Right cardiac atrium (tissue), 5 donors: ENCODE measurements at regions of chr6 and their contacts with region 1.

Region 1: DNA sequence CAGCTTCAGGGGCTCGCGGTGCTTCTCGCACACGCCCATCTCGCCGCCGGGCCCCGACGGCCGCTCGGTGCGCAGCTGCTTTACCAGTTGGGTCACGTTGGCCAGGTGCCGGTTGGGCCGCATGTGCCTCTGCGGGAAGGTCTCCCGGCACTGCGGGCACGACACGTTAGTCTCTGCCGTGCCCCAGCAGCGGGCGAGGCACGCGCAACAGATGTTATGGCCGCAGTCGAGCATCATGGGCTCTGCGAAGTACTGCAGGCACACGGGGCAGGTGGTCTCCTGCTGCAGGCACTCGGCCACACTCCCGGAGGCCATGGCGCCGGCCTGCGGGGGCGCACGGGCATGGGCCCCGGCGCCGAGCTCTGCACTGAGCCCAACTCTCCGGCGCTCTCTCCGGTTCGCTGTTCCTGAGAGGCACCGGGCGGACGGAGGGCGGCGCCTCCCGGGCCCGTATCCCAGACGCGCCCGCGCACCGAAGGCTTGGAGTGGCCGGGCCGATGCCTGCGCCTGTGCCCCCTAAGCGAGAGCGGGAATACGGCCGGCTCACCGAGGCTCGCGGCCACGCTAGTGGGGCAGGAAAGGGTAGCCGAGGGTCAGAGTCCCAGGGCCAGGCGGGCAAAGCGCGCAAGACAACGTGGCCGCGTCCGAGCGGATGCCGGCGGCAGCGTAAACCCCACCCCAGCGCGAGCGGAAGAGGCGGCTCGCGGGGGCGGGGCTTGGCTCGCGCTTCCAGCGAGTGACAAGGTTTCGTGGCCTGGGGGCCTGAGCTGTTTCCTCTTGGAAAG is at the start of gene TRIM27:
- DNase-seq: peak; percentile 95 to 98 (median 97)
- ATAC-seq: peak; percentile 97
- H3K4me3 ChIP-seq: peak within 1 kb of the TSS; percentile 50
- H3K27ac ChIP-seq: peak within 1 kb of the TSS; percentile 96
- H3K4me1 ChIP-seq: peaks cover 2% of the 10 kb centered on the region
- H3K27me3 ChIP-seq: no peaks in the 10 kb centered on the region
- total RNA-seq, gene TRIM27: 17.9 to 23.1 (median 22.0) TPM

Region 2: DNA sequence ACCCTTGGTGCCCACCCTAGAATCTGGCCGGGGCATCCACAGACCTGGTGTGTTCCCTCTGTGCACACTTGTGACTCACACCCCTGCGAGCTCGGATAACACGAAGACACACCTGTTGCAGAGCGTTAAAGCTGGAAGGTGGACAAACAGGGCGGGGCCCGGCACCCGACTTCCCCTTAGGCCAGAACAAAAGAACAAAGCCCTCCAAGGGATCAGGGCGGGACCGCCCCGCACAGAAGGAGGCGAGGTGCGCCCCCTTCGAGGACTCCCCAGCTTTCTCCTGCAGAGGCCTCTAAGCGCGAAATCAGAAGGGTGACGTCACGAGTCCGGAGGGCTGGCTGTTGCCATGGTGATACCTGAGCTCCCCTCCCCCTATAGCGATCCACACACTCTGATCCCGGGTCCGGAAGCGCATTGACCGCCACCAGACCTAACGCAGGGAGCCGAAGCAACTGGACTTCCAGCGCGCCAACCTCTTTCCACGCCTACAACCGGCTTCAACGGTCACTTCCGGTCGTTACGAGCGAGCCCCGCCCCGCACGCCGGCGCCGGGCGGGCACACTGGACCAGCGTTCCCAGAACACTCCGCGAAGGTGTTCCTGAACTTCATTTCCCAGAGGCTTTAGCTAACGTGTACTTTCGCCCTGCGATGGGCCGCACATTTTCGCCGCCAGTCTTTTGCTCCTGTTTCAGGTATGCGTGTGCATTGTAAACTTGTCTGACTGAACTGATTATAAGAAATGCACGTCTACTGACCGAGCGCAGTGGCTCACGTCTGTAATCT is 1450.7 kb before region 1 on chr6 and contains the start of gene ZNF184:
- intact Hi-C with region 1: loop called in 1 of 4 experiments (anchors 10 kb)
- DNase-seq: peak; percentile 97 to 98 (median 97)
- ATAC-seq: peak; percentile 100
- H3K4me3 ChIP-seq: peak within 1 kb of the TSS; percentile 87
- H3K27ac ChIP-seq: peak within 1 kb of the TSS; percentile 96
- H3K4me1 ChIP-seq: no peaks in the 10 kb centered on the region
- H3K27me3 ChIP-seq: no peaks in the 10 kb centered on the region
- total RNA-seq, gene ZNF184: 3.3 to 5.1 (median 4.5) TPM

Region 3: DNA sequence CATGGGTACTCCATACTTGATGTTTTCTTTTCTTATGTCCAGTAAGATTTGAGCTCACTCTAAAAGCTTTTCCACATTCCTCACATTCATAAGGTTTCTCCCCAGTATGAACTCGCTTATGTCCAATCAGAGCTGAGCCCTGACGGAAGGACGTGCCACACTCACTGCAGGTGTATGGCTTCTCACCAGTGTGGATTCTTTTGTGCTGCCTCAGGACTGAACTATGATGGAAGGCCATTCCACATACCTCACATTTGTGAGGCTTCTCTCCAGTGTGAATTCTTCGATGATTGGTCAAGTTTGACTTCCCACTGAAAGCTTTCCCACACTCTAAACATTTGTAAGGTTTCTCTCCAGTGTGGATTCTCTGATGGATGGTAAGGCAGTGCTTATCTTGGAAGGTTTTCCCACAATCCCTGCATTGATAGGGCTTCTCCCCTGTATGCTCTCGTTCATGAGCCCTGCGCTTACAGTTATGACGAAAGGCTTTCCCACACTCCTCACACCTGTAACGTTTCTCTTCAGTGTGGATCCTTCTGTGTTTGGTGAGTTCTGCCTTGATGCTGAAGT is 71.7 kb after region 1 on chr6:
- intact Hi-C with region 1: no loop called
- DNase-seq: no peak
- ATAC-seq: no peak
- H3K4me3 ChIP-seq: no peak overlapping the region
- H3K27ac ChIP-seq: no peak overlapping the region
- H3K4me1 ChIP-seq: no peaks in the 10 kb centered on the region
- H3K27me3 ChIP-seq: no peaks in the 10 kb centered on the region

Region 4: DNA sequence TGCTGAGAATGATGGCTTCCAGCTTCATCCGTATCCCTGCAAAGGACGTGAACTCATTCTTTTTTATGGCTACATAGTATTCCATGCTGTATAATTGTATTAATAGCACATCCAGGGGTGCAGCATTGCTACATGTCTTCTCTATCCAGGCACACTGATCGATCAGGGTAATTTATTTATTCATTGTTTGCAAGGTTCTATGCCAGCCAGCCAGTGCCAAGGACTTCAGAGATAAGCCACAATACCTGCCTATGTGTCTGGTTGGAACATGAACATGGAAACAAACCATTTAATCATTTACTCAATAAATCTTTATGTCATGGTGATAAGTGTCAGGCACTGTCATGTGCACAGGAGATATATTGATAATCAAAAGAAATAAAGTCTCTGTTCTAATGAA is 169.4 kb after region 1 on chr6:
- intact Hi-C with region 1: no loop called
- DNase-seq: no peak
- ATAC-seq: no peak
- H3K4me3 ChIP-seq: no peak overlapping the region
- H3K27ac ChIP-seq: no peak overlapping the region
- H3K4me1 ChIP-seq: no peaks in the 10 kb centered on the region
- H3K27me3 ChIP-seq: no peaks in the 10 kb centered on the region

Region 5: DNA sequence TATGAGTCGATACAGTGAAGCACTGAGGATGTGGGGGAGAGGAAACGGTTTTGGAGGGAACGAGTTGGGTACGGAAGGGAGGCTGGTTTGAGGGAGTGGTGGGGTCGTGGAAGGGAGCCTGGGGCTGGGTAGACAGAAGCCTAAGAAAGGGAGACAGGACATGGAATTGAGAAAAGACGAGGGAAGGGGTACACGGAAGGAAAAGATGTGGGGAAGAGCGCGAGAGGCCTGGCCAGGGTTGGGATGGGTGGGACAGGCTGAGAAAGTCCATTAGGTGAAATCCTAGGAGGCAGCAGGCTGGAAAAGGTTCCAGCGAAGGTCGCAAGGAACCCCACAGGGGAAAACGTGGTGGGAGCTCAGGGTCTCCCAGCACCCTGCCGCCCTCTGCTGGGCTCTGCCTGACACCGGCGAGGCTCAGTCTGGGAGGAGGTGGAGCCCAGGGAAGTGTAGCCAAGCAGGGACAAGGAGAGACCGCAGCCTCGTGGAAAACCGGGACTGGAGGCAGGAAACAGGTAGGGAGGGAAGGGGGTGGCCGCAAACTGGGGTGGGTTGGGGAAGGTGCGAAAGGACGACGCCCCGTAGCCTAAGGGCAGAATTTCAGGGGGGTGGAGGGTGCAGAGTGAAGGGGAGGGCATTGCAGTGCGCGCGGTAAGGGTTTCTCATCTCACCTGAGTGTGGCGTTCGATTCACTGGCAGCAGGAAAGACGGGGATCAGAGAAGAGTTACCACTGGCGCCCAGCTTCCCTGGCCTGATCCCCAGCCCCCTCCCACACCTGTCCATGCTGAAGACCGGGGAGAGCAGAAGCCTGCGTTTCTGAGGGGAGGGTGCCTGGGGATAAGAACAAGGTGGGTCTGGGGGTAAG is 705.1 kb after region 1 on chr6:
- intact Hi-C with region 1: loop called in 1 of 4 experiments (anchors 10 kb)
- DNase-seq: peak; percentile 82 to 93 (median 91)
- ATAC-seq: peak; percentile 64 to 67
- H3K4me3 ChIP-seq: peak overlapping the region; percentile 53
- H3K27ac ChIP-seq: peak overlapping the region; percentile 51
- H3K4me1 ChIP-seq: peaks cover 8% of the 10 kb centered on the region
- H3K27me3 ChIP-seq: no peaks in the 10 kb centered on the region